ENCODE measurements at regions of chr10 and their contacts with region 1.

Region 1: GRCh38 chr10:102394079-102394800 is 1.3 kb upstream of the NFKB2 start:
- DNase-seq: peak; percentile 99
- H3K4me3 Mint-ChIP-seq: peak overlapping the region; percentile 87
- H3K27ac Mint-ChIP-seq: peak overlapping the region; percentile 99
- H3K4me1 Mint-ChIP-seq: peaks cover 44% of the 10 kb centered on the region
- H3K27me3 Mint-ChIP-seq: no peaks in the 10 kb centered on the region

Region 2: GRCh38 chr10:101938316-101939281 is 455.6 kb before region 1 on chr10:
- CTCF ChIA-PET with region 1: no interaction called
- intact Hi-C with region 1: no loop called
- DNase-seq: no peak
- H3K4me3 Mint-ChIP-seq: no peak overlapping the region
- H3K27ac Mint-ChIP-seq: no peak overlapping the region
- H3K4me1 Mint-ChIP-seq: peaks cover 1% of the 10 kb centered on the region
- H3K27me3 Mint-ChIP-seq: no peaks in the 10 kb centered on the region

Region 3: DNA sequence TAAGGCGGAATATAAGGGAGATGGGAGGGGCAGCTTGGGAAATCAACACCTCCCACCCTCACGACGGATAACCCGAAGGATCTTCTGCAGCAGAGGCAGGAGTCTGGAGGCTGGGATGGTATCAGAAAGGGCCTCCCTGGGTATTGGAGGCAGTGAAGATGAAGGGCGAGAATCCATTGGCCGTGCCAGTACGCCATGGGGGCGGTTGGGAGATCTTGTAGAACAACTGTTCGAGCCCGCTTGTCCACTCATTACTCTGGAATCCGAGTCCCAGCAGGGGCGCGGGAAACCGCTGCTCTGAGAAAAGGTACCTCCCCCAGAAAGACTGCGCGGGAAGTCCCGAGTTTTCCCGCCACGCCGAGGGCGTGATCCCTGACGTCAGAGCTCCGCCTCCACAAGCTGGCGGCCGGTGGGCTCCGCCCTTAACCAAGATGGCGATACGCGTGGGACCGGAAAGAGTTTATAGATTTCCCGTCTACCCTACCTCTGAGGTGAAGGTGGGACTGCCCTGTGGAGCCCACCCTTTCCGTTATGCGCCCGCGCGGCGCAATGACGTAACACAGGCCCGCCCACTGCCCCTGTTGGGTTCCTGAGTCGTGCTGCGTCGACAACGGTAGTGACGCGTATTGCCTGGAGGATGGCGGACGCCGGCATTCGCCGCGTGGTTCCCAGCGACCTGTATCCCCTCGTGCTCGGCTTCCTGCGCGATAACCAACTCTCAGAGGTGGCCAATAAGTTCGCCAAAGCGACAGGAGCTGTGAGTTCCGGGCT is 242.3 kb before region 1 on chr10 and contains the start of gene NOLC1:
- CTCF ChIA-PET with region 1: interaction called, 3 read pairs
- intact Hi-C with region 1: loop called (anchors 1 kb)
- DNase-seq: peak; percentile 100
- H3K4me3 Mint-ChIP-seq: peak within 1 kb of the TSS; percentile 98
- H3K27ac Mint-ChIP-seq: peak within 1 kb of the TSS; percentile 96
- H3K4me1 Mint-ChIP-seq: peaks cover 53% of the 10 kb centered on the region
- H3K27me3 Mint-ChIP-seq: no peaks in the 10 kb centered on the region
- total RNA-seq, gene NOLC1: 182 to 194 TPM

Region 4: GRCh38 chr10:102268375-102268888 is 125.8 kb before region 1 on chr10:
- CTCF ChIA-PET with region 1: no interaction called
- intact Hi-C with region 1: loop called (anchors 1 kb)
- DNase-seq: no peak
- H3K4me3 Mint-ChIP-seq: no peak overlapping the region
- H3K27ac Mint-ChIP-seq: peak overlapping the region; percentile 87
- H3K4me1 Mint-ChIP-seq: peaks cover 65% of the 10 kb centered on the region
- H3K27me3 Mint-ChIP-seq: no peaks in the 10 kb centered on the region

Region 5: DNA sequence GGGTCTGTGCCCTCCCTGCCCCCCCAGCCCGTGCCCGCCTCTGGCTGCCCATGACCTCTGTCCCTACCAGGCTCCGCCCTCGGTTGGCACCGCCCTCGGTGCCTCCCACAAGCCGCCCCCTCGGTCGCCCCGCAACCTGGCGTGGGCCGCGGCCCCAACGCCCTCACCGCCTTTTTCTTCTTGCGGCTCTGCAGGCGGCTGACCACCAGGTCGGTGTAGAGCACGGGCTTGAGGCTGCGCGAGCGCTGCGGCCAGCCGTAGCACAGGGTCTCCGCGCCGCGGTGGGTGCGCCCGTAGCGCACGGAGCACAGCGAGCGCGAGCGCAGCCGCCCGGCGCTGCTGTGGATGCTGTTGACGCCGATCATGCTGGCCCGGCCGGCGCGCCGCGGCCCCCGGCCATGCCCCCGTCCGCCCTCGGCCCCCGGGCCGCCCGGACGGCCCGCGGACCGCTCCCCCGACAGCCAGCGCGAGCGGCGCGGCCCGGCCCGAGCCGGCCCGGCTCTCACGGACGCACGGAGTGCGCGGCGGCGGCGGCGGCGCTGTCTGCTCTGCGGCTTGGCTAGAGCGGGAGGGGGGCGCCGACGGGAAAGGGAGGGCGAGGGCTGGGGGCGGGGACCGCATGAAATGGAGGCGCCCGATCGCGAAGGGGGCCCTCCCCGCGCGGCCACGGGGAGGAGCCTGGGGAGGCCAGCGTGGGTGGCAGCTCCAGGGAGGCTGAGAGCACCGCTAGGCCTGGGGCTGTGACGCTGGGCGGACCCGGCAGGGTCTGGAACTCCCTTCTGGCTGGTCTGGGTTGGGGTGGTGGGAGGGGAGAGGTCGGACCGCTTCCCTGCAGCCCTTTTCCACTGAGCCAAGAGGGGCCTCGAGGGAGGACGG is 14.7 kb after region 1 on chr10:
- CTCF ChIA-PET with region 1: interaction called, 25 read pairs
- intact Hi-C with region 1: loop called (anchors 1 kb)
- DNase-seq: peak; percentile 85
- H3K4me3 Mint-ChIP-seq: peak overlapping the region; percentile 74
- H3K27ac Mint-ChIP-seq: no peak overlapping the region
- H3K4me1 Mint-ChIP-seq: peaks cover 28% of the 10 kb centered on the region
- H3K27me3 Mint-ChIP-seq: no peaks in the 10 kb centered on the region

Region 6: DNA sequence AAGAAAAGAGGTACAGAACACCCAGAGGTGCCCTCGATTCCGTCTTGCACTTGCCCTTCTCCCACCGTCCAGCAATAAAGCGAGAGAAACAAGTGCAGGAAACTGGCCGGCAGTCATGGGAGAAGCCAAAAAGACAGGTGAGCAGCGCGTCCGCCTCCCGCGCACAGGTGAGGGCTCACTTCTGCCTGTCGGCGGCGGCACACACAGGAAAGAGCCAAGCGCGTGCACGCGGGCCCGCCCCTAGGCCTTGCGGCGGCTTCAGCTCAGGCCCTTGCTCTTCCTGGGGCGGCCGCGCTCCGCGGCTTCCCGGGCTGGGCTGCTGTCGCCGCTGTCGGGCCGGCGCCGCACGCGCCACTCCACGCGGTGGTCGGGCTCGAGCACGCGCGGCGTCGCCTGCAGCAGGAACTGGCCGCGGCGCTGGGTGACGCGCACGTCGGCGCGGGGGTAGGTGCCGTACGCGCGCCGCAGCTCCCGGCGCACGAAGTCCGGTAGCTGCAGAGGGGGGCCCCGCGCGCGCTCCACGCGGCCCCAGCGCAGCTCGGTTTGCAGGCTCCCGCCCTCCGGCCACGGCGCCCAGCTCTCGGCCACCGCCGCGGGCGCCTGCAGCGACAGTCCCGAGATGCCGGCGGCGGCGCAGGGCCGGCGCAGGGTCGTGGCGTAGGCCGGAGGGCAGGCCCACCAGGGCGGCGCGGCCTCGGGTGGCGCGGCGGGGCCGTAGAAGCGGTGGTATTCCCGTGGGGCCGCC is 56.1 kb after region 1 on chr10:
- CTCF ChIA-PET with region 1: interaction called, 6 read pairs
- intact Hi-C with region 1: loop called (anchors 1 kb)
- DNase-seq: peak; percentile 82
- H3K4me3 Mint-ChIP-seq: peak overlapping the region; percentile 96
- H3K27ac Mint-ChIP-seq: peak overlapping the region; percentile 96
- H3K4me1 Mint-ChIP-seq: peaks cover 27% of the 10 kb centered on the region
- H3K27me3 Mint-ChIP-seq: no peaks in the 10 kb centered on the region

Region 7: GRCh38 chr10:102583435-102584417 is 189.5 kb after region 1 on chr10:
- CTCF ChIA-PET with region 1: interaction called, 6 read pairs
- intact Hi-C with region 1: loop called (anchors 5 kb)
- DNase-seq: peak; percentile 94
- H3K4me3 Mint-ChIP-seq: no peak overlapping the region
- H3K27ac Mint-ChIP-seq: no peak overlapping the region
- H3K4me1 Mint-ChIP-seq: peaks cover 5% of the 10 kb centered on the region
- H3K27me3 Mint-ChIP-seq: no peaks in the 10 kb centered on the region

Measured in activated naive CD4-positive, alpha-beta T cell treated with anti-CD3 and anti-CD28 coated beads for 36 hours (primary cell).